BJ (cell line): ENCODE measurements at regions of chr5 and their contacts with region 1.

Region 1: DNA sequence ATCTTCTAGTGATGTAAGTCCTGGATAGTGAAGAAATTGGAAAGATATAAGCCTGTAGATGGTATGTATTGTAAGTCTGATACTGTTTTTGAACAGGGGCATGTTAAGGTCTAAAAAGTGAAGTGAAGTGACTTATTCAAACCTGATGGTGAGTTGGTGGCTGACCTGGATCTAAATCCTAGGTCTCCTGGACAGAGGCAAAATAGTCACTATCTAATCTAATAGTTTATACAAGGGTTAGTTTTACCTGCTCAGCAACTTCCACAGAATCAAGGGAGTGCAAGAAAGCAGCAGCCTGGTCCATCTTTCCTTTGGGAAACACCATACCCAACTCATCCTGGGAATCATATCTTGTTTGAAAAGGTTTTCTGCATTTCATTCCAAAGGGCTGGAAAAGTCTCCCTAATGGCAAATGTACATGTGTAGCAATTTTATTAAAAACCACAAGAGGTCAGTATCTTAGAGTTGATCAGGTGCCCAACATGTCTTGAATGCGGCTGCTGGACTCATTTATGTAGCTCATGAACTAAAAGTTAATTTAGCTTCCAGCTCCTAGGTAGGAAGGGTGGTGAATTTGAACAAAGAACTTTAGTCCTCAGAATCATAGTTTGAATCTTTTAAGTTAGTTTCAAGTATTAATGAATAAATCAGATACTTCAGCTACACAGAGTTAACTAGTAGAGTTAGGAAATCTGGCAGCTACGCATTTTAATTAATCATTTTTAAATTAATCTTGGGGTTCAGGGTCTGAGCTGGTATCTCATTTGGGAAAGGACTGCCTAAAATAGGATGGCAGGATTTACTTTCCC is 26.0 kb downstream of the SKP2 start:
- DNase-seq: no peak
- H3K4me3 ChIP-seq: no peak overlapping the region
- H3K27me3 ChIP-seq: no peaks in the 10 kb centered on the region
- CTCF ChIP-seq: peak; percentile 58

Region 2: GRCh38 chr5:35926389-35927051 is 251.4 kb before region 1 on chr5:
- CTCF ChIA-PET with region 1: no interaction called
- POLR2A ChIA-PET with region 1: no interaction called
- DNase-seq: no peak
- H3K4me3 ChIP-seq: no peak overlapping the region
- H3K27me3 ChIP-seq: no peaks in the 10 kb centered on the region
- CTCF ChIP-seq: peak; percentile 73

Region 3: GRCh38 chr5:36158144-36158543 is 19.8 kb before region 1 on chr5:
- CTCF ChIA-PET with region 1: interaction called, 12 read pairs
- POLR2A ChIA-PET with region 1: no interaction called
- DNase-seq: no peak
- H3K4me3 ChIP-seq: no peak overlapping the region
- H3K27me3 ChIP-seq: no peaks in the 10 kb centered on the region
- CTCF ChIP-seq: no peak